ENCODE measurements at regions of chr5 and their contacts with region 1.

Region 1: DNA sequence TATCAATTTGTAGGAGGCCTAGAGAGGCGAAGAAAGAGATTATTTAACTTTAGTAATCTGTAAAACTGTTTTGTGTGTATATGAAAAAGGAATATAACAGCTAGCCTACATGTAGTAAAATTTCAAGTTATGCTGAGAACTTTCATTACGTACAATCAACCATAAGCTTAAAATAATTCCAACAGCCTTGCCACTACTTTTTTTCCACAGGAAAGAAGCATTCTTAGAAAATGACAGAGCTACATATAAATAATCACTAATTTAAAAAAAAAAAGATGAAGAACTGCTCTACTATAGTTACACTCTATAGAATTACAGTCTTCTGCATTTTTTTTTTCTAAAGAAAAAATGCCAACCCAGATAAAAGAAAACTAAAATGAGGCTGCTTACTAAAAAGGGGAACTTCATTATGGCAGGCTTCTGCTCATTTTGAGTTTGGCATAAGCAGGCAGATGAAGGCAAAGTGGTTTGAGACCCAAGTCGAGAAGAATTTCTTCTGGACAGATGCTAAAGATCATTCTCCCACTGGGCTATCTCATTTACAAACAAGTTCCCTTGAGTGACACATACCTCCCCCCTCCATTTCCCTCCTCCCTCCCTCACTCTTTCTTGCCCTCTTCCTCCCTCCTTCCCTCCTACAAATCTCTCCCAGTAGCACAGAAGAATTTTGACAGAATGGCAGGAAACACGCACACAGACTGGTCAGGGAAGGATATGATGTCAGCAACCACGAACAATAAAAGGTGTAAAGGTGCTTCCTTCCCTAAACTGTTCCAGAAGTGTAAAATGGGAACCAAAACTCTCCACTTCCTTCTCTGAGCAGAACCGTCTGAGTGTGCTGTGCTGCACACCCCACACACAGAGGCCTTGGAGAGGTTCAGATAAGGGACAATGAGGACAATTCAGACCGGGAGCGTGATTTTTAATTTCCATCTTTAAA is 56.1 kb downstream of the MEF2C start:
- DNase-seq: no peak
- H3K4me3 ChIP-seq: peak overlapping the region; percentile 40
- H3K27ac ChIP-seq: peak overlapping the region; percentile 89
- H3K4me1 ChIP-seq: peaks cover 90% of the 10 kb centered on the region
- H3K27me3 ChIP-seq: no peaks in the 10 kb centered on the region
- CTCF ChIP-seq: no peak

Region 2: GRCh38 chr5:88659529-88660263 is 167.2 kb before region 1 on chr5:
- intact Hi-C with region 1: no loop called
- DNase-seq: no peak
- H3K4me3 ChIP-seq: no peak overlapping the region
- H3K27ac ChIP-seq: no peak overlapping the region
- H3K4me1 ChIP-seq: peaks cover 10% of the 10 kb centered on the region
- H3K27me3 ChIP-seq: peaks cover 99% of the 10 kb centered on the region
- CTCF ChIP-seq: no peak

Region 3: GRCh38 chr5:88883059-88883835 is 56.3 kb after region 1 on chr5 and contains the start of gene MEF2C:
- intact Hi-C with region 1: loop called (anchors 5 kb)
- DNase-seq: peak; percentile 74
- H3K4me3 ChIP-seq: peak within 1 kb of the TSS; percentile 79
- H3K27ac ChIP-seq: peak within 1 kb of the TSS; percentile 94
- H3K4me1 ChIP-seq: peaks cover 66% of the 10 kb centered on the region
- H3K27me3 ChIP-seq: no peaks in the 10 kb centered on the region
- CTCF ChIP-seq: no peak
- total RNA-seq, gene MEF2C: 54.2 TPM

Region 4: DNA sequence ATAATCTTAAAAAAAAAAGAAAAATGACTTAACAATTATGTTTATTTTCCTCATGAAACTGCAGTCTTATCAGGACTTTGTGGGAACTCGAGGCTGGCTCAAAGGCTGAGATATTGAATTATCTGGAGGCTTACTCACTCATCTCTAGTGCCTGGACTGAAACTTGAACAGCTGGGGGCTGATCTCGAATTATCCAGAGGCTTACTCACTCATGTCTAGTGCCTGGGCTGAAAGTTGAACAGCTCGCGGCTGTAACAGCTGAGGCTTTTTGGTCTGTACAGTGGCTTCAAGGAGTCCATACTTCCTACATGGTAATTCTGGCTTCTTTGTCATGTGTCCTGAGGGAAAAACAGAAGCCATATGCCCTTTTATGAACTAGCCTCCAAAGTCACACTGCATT is 1210.7 kb after region 1 on chr5:
- intact Hi-C with region 1: no loop called
- DNase-seq: no peak
- H3K4me3 ChIP-seq: no peak overlapping the region
- H3K27ac ChIP-seq: no peak overlapping the region
- H3K4me1 ChIP-seq: no peaks in the 10 kb centered on the region
- H3K27me3 ChIP-seq: no peaks in the 10 kb centered on the region
- CTCF ChIP-seq: no peak

Measured in left ventricle myocardium inferior (tissue), 1 donor.